ENCODE measurements at regions of chr4 and their contacts with region 1.

Region 1: GRCh38 chr4:139301113-139301820 is at the start of gene NAA15:
- DNase-seq: peak; percentile 92
- ATAC-seq: peak; percentile 79
- H3K4me3 ChIP-seq: peak within 1 kb of the TSS; percentile 99
- H3K27ac ChIP-seq: peak within 1 kb of the TSS; percentile 74
- H3K4me1 ChIP-seq: peaks cover 31% of the 10 kb centered on the region
- H3K27me3 ChIP-seq: no peaks in the 10 kb centered on the region
- CTCF ChIP-seq: no peak
- total RNA-seq, gene NAA15: 40.0 and 41.0 TPM in 2 replicates

Region 2: GRCh38 chr4:139367421-139368090 is 66.3 kb after region 1 on chr4:
- CTCF ChIA-PET with region 1: no interaction called
- POLR2A ChIA-PET with region 1: no interaction called
- intact Hi-C with region 1: loop called (anchors 1 kb)
- DNase-seq: peak; percentile 66
- ATAC-seq: peak; percentile 97
- H3K4me3 ChIP-seq: no peak overlapping the region
- H3K27ac ChIP-seq: peak overlapping the region; percentile 37; the same call in 1 of the 2 replicates
- H3K4me1 ChIP-seq: peaks cover 12% of the 10 kb centered on the region; the same call in 1 of the 2 replicates
- H3K27me3 ChIP-seq: no peaks in the 10 kb centered on the region
- CTCF ChIP-seq: no peak

Region 3: GRCh38 chr4:140163029-140163810 is 862.0 kb after region 1 on chr4:
- CTCF ChIA-PET with region 1: no interaction called
- POLR2A ChIA-PET with region 1: no interaction called
- intact Hi-C with region 1: no loop called
- DNase-seq: no peak
- ATAC-seq: no peak
- H3K4me3 ChIP-seq: no peak overlapping the region
- H3K27ac ChIP-seq: no peak overlapping the region
- H3K4me1 ChIP-seq: 0 out of 2 replicates have a peak, but pooled peaks cover 3% of the 10 kb centered on the region
- H3K27me3 ChIP-seq: no peaks in the 10 kb centered on the region
- CTCF ChIP-seq: no peak